ENCODE measurements at regions of chr16 and their contacts with region 1.

Region 1: GRCh38 chr16:74650966-74651567 is 15.6 kb downstream of the RFWD3 start:
- DNase-seq: no peak
- ATAC-seq: no peak
- H3K4me3 ChIP-seq: no peak overlapping the region
- H3K27ac ChIP-seq: no peak overlapping the region
- H3K4me1 ChIP-seq: peaks cover 4% of the 10 kb centered on the region
- H3K27me3 ChIP-seq: no peaks in the 10 kb centered on the region
- CTCF ChIP-seq: peak; percentile 50
- POLR2A ChIP-seq: no peak
- RAD21 ChIP-seq: no peak

Region 2: GRCh38 chr16:74438492-74439041 is 212.5 kb before region 1 on chr16:
- CTCF ChIA-PET with region 1: no interaction called
- POLR2A ChIA-PET with region 1: interaction called, 28 read pairs
- dilution Hi-C with region 1: no loop called
- in situ Hi-C with region 1: no loop called
- intact Hi-C with region 1: no loop called
- DNase-seq: no peak
- ATAC-seq: no peak
- H3K4me3 ChIP-seq: no peak overlapping the region
- H3K27ac ChIP-seq: no peak overlapping the region
- H3K4me1 ChIP-seq: no peaks in the 10 kb centered on the region
- H3K27me3 ChIP-seq: no peaks in the 10 kb centered on the region
- CTCF ChIP-seq: no peak
- POLR2A ChIP-seq: no peak
- RAD21 ChIP-seq: no peak

Region 3: GRCh38 chr16:74462356-74462755 is 188.7 kb before region 1 on chr16:
- CTCF ChIA-PET with region 1: no interaction called
- POLR2A ChIA-PET with region 1: interaction called, 12 read pairs
- dilution Hi-C with region 1: no loop called
- in situ Hi-C with region 1: no loop called
- intact Hi-C with region 1: no loop called
- DNase-seq: no peak
- ATAC-seq: no peak
- H3K4me3 ChIP-seq: no peak overlapping the region
- H3K27ac ChIP-seq: no peak overlapping the region
- H3K4me1 ChIP-seq: no peaks in the 10 kb centered on the region
- H3K27me3 ChIP-seq: no peaks in the 10 kb centered on the region
- CTCF ChIP-seq: no peak
- POLR2A ChIP-seq: no peak
- RAD21 ChIP-seq: no peak

Region 4: GRCh38 chr16:74666425-74667254 is 15.6 kb after region 1 on chr16 and contains the start of gene RFWD3:
- CTCF ChIA-PET with region 1: interaction called, 3 read pairs
- POLR2A ChIA-PET with region 1: interaction called, 23 read pairs
- dilution Hi-C with region 1: no loop called
- in situ Hi-C with region 1: no loop called
- intact Hi-C with region 1: no loop called
- DNase-seq: peak; percentile 99
- ATAC-seq: peak; percentile 100
- H3K4me3 ChIP-seq: peak within 1 kb of the TSS; percentile 89
- H3K27ac ChIP-seq: peak within 1 kb of the TSS; percentile 70
- H3K4me1 ChIP-seq: no peaks in the 10 kb centered on the region
- H3K27me3 ChIP-seq: no peaks in the 10 kb centered on the region
- CTCF ChIP-seq: no peak
- POLR2A ChIP-seq: peak; percentile 91
- RAD21 ChIP-seq: no peak
- total RNA-seq, gene RFWD3: 27.6 and 28.3 TPM in 2 replicates